ENCODE measurements at regions of chr22 and their contacts with region 1.

Region 1: GRCh38 chr22:26330966-26331625 is 98.0 kb upstream of the ASPHD2 start:
- DNase-seq: peak; percentile 81
- ATAC-seq: peak; percentile 94
- H3K4me3 Mint-ChIP-seq: no peak overlapping the region
- H3K27ac Mint-ChIP-seq: no peak overlapping the region
- H3K4me1 Mint-ChIP-seq: no peaks in the 10 kb centered on the region
- H3K27me3 Mint-ChIP-seq: peaks cover 23% of the 10 kb centered on the region
- CTCF ChIP-seq: peak; percentile 93

Region 2: GRCh38 chr22:25903294-25903693 is 427.8 kb before region 1 on chr22:
- CTCF ChIA-PET with region 1: interaction called, 18 read pairs
- POLR2A ChIA-PET with region 1: no interaction called
- DNase-seq: peak; percentile 85
- ATAC-seq: peak; percentile 94
- H3K4me3 Mint-ChIP-seq: no peak overlapping the region
- H3K27ac Mint-ChIP-seq: 0 out of 2 replicates have a peak overlapping the region, but pooled peaks have one; percentile 43
- H3K4me1 Mint-ChIP-seq: peaks cover 13% of the 10 kb centered on the region
- H3K27me3 Mint-ChIP-seq: peaks cover 3% of the 10 kb centered on the region
- CTCF ChIP-seq: peak; percentile 88

Region 3: GRCh38 chr22:26159886-26160285 is 171.2 kb before region 1 on chr22:
- CTCF ChIA-PET with region 1: interaction called, 10 read pairs
- POLR2A ChIA-PET with region 1: no interaction called
- DNase-seq: no peak
- ATAC-seq: no peak
- H3K4me3 Mint-ChIP-seq: no peak overlapping the region
- H3K27ac Mint-ChIP-seq: no peak overlapping the region
- H3K4me1 Mint-ChIP-seq: peaks cover 8% of the 10 kb centered on the region
- H3K27me3 Mint-ChIP-seq: peaks cover 12% of the 10 kb centered on the region
- CTCF ChIP-seq: no peak

Region 4: GRCh38 chr22:26259519-26259918 is 71.6 kb before region 1 on chr22:
- CTCF ChIA-PET with region 1: interaction called, 23 read pairs
- POLR2A ChIA-PET with region 1: no interaction called
- DNase-seq: peak; percentile 81
- ATAC-seq: peak; percentile 80
- H3K4me3 Mint-ChIP-seq: no peak overlapping the region
- H3K27ac Mint-ChIP-seq: no peak overlapping the region
- H3K4me1 Mint-ChIP-seq: peaks cover 6% of the 10 kb centered on the region
- H3K27me3 Mint-ChIP-seq: peaks cover 18% of the 10 kb centered on the region
- CTCF ChIP-seq: no peak

Region 5: DNA sequence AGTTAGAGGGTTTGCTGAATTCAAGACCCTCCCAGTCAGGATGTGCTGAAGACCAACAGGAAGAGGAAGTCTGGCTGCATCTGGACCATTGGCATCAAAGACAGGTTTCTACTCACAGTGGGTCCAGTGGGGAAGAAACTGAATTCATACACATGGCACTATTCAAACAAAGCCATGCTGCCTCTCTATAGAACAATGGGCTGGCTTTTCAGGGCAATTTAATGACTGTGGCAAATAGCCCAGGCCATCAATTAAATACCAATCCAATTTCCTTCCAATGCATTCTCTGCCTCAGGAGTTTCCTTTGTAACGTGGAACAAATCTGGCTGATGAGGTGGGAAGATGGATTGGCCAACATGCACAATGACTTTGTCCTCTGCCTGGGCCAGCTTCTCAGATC is 63.2 kb before region 1 on chr22:
- CTCF ChIA-PET with region 1: interaction called, 19 read pairs
- POLR2A ChIA-PET with region 1: no interaction called
- DNase-seq: no peak
- ATAC-seq: no peak
- H3K4me3 Mint-ChIP-seq: no peak overlapping the region
- H3K27ac Mint-ChIP-seq: no peak overlapping the region
- H3K4me1 Mint-ChIP-seq: no peaks in the 10 kb centered on the region
- H3K27me3 Mint-ChIP-seq: peaks cover 4% of the 10 kb centered on the region; the same call in 1 of the 2 replicates
- CTCF ChIP-seq: no peak

Region 6: GRCh38 chr22:26295563-26296126 is 35.5 kb before region 1 on chr22:
- CTCF ChIA-PET with region 1: interaction called, 26 read pairs
- POLR2A ChIA-PET with region 1: no interaction called
- DNase-seq: no peak
- ATAC-seq: no peak
- H3K4me3 Mint-ChIP-seq: no peak overlapping the region
- H3K27ac Mint-ChIP-seq: no peak overlapping the region
- H3K4me1 Mint-ChIP-seq: peaks cover 30% of the 10 kb centered on the region
- H3K27me3 Mint-ChIP-seq: no peaks in the 10 kb centered on the region
- CTCF ChIP-seq: no peak

Region 7: DNA sequence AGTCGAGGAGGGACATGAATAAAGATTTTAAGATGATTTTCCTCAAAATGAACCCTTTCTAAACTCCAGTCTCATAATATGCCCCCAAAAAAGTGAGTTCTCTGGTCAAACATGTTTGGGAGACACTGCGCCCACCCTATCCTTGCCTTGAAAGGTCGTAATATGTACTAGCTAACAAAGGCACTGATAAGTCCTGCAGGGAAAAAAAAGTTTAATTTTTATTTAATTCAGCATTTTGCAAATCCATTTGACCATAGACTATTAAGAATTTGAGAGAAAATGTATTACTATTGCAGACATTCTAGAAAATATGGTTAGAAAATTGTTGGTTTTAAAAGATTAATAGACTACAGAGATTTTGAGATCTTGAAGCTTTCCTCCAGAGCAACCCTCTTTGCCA is 22.6 kb before region 1 on chr22:
- CTCF ChIA-PET with region 1: interaction called, 13 read pairs
- POLR2A ChIA-PET with region 1: no interaction called
- DNase-seq: no peak
- ATAC-seq: no peak
- H3K4me3 Mint-ChIP-seq: no peak overlapping the region
- H3K27ac Mint-ChIP-seq: no peak overlapping the region
- H3K4me1 Mint-ChIP-seq: peaks cover 5% of the 10 kb centered on the region
- H3K27me3 Mint-ChIP-seq: no peaks in the 10 kb centered on the region
- CTCF ChIP-seq: no peak